ENCODE measurements at regions of chr1 and their contacts with region 1.

Region 1: DNA sequence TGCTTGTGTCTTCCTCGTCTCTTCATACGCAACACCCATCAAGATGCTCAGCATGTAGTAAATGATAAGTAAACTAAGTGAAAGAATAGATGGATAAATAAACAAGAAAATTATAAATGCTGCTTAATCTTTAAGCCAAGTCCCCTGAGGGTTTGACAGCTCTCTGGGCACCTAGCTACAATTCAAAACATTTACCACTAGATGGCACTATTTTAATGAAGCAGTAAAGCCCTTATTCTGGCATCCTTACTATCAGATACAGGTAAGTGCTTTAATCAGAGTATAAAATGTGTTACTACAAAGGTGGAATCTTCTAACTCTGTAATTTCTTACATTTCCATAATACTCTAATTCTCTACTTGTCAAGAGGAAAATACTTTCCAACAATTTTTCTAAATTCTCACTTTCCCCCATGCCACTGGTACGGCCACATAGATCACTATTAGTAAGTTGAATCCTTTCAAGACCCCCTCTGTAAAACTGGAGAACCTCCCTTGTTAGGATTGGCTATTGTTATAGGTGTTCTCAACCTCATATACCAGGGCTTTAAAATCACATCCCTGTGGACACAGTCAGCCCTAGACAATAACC is 137.8 kb downstream of the BARHL2 start:
- DNase-seq: no peak
- H3K4me3 ChIP-seq: no peak overlapping the region
- H3K27ac ChIP-seq: no peak overlapping the region
- H3K4me1 ChIP-seq: no peaks in the 10 kb centered on the region
- H3K27me3 ChIP-seq: peaks cover 0 to 26% (median 0%) of the 10 kb centered on the region in 7 donors
- CTCF ChIP-seq: peak; percentile 15 to 77 (median 59)
- POLR2A ChIP-seq: no peak

Region 2: DNA sequence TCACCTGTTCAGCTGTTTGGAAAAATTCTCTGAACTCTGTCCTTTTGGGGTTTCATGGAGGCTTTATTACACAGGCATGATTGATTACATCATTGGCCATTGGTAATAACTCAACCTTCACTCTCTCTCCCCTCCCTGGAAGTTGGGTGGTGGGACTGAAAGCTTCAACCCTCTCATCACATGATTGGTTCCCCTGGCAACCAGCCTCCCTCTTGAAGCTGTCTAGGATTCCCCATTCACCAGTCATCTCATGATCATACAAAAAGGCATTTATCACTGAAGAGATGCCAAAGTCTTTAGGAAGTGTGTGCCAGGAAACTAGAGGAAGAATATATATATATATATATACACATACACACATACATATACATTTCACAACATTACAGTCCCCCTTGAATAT is 355.9 kb before region 1 on chr1:
- intact Hi-C with region 1: no loop called
- DNase-seq: no peak
- H3K4me3 ChIP-seq: no peak overlapping the region
- H3K27ac ChIP-seq: no peak overlapping the region
- H3K4me1 ChIP-seq: no peaks in the 10 kb centered on the region
- H3K27me3 ChIP-seq: peaks cover 0 to 9% (median 0%) of the 10 kb centered on the region in 7 donors
- CTCF ChIP-seq: no peak
- POLR2A ChIP-seq: no peak

Region 3: DNA sequence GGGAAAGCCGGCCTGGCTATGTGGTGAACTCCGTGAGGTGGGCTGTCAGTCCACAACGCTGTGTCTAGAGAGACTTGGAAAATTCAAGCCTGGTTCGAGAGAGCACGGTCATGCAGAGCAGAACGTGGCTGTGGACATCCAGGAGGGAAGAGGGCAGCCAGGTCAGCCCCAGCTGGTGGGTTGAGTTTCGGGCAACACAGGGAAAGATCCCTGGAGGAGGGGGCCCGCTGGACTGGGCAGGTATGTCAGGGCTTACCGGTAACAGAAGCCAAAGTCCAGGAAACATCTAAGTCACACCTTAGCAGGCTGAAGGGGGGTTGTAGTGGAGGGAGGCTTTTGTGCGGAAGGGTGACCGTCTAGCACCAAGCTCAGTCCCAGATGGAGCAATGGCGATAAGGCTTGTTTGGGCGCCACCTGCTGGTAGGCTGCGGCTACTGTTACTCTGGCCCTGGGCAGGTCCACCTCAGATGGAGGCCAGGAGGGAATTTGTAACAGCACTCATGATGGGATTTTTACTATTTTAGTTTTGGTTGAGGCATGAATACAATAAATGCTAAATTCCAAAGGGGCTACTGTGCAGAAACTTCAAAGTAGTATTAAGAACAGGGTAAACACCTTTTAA is 585.8 kb after region 1 on chr1:
- intact Hi-C with region 1: loop called (anchors 5 kb)
- DNase-seq: peak; percentile 91
- H3K4me3 ChIP-seq: no peak overlapping the region
- H3K27ac ChIP-seq: no peak overlapping the region
- H3K4me1 ChIP-seq: peaks cover 0 to 6% (median 0%) of the 10 kb centered on the region in 6 donors
- H3K27me3 ChIP-seq: no peaks in the 10 kb centered on the region
- CTCF ChIP-seq: peak; percentile 57 to 93 (median 86)
- POLR2A ChIP-seq: no peak

Measured in spleen (tissue), 13 donors.